ENCODE measurements at regions of chr22 and their contacts with region 1.

Region 1: GRCh38 chr22:31943976-31944699 is at the start of gene YWHAH:
- DNase-seq: peak; percentile 96 to 99 (median 97)
- ATAC-seq: peak; percentile 91 to 95 (median 94)
- H3K4me3 ChIP-seq: peak within 1 kb of the TSS; percentile 79 to 98 (median 96)
- H3K27ac ChIP-seq: peak within 1 kb of the TSS; percentile 95 to 100 (median 98)
- H3K4me1 ChIP-seq: peaks cover 0 to 43% (median 29%) of the 10 kb centered on the region in 12 donors
- H3K27me3 ChIP-seq: no peaks in the 10 kb centered on the region
- CTCF ChIP-seq: no peak
- POLR2A ChIP-seq: peak in 1 of 2 donors; percentile 67
- total RNA-seq, gene YWHAH: 57.5 to 126 (median 84.1) TPM

Region 2: DNA sequence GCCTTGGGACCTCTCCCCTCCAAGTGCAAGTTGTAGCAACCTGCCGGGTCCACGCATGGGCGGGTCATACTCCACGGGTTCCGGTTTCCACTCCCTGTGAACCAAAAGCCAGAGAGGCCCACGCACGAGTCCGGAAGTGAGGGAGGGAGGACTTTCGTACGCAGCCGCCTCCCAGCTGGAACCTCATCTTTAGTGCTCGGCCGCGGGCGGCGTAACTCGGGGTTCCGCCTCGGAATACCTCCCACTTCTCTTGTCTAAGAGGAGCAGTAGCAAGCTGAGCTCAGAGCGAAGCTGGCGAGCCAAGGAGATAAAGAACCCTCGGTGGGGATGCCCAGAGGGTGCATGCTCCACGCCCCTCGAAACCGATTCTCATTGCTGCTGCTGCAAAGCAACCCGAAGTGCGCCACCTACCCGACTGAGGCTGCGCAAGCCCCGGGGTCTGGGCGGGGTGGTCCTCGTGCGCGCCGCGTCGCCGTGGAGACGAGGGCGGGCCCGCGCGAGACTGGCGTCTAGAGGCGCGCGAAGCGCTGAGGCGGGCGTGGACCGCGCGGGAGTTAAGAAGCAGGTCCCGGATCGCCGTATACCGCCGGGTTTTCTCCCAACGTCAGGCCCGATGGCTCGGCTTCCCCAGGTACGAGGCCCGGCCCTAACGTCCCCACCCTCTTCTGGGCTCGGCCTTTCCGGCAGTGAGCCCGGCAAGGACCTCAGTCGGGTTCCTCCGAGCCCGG is 448.0 kb before region 1 on chr22 and contains the start of gene SFI1:
- intact Hi-C with region 1: loop called in 1 of 10 experiments (anchors 10 kb)
- DNase-seq: peak; percentile 92 to 96 (median 93)
- ATAC-seq: peak; percentile 92 to 98 (median 97)
- H3K4me3 ChIP-seq: peak within 1 kb of the TSS; percentile 53 to 95 (median 84)
- H3K27ac ChIP-seq: peak within 1 kb of the TSS in 11 of 12 donors; percentile 65 to 93 (median 83)
- H3K4me1 ChIP-seq: peaks cover 2 to 28% (median 13%) of the 10 kb centered on the region in 12 donors
- H3K27me3 ChIP-seq: no peaks in the 10 kb centered on the region
- CTCF ChIP-seq: peak in 9 of 12 donors; percentile 14 to 59 (median 37)
- POLR2A ChIP-seq: peak in 1 of 2 donors; percentile 52
- total RNA-seq, gene SFI1: 2.2 to 18.3 (median 6.4) TPM

Region 3: DNA sequence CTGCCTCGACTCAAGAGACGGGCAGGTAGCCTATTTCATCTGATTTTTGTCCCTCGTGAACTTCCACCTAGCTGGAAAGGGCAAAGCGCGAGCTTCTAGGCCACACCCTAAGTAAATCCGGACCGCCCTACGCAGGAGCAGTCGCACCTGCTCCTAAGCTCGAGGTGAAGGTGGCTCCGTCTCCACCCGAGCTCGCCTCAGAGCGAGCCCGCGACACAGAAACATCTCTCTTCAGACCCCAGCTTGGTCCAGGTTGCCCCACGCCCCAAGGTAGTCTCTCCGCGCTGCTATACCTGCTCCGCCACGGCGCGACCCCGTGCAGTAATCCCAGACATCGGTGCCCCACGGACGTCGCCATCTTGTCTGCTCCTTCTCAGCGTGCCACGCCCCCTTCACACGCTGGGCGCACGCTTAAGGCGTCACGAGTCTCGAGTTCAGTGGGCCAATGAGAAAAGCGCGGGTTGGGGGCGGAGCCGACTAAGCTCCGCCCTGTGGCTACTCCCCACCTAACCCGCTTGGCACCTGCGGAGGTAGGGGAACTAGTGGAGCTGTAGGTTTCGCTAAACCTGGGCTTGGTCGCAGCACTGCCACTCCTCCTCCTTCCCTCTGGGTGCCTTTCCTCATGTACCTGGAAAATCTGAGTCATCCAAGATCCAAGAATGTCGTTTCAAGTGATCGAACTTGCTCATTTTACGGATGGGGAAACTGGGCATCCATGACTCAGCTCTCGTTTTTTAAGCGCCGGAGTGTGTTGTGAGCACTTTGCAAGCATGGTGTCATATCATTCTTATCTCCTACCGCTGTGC is 282.1 kb before region 1 on chr22 and contains the start of gene PISD:
- intact Hi-C with region 1: loop called in 4 of 10 experiments (anchors 10 kb)
- DNase-seq: peak; percentile 94 to 97 (median 96)
- ATAC-seq: peak; percentile 98 to 100 (median 100)
- H3K4me3 ChIP-seq: peak within 1 kb of the TSS; percentile 33 to 100 (median 86)
- H3K27ac ChIP-seq: peak within 1 kb of the TSS in 10 of 12 donors; percentile 34 to 81 (median 54)
- H3K4me1 ChIP-seq: peaks cover 0 to 21% (median 13%) of the 10 kb centered on the region in 12 donors
- H3K27me3 ChIP-seq: no peaks in the 10 kb centered on the region
- CTCF ChIP-seq: no peak
- POLR2A ChIP-seq: peak in 1 of 2 donors; percentile 58
- total RNA-seq, gene PISD: 13.1 to 38.1 (median 17.0) TPM

Region 4: DNA sequence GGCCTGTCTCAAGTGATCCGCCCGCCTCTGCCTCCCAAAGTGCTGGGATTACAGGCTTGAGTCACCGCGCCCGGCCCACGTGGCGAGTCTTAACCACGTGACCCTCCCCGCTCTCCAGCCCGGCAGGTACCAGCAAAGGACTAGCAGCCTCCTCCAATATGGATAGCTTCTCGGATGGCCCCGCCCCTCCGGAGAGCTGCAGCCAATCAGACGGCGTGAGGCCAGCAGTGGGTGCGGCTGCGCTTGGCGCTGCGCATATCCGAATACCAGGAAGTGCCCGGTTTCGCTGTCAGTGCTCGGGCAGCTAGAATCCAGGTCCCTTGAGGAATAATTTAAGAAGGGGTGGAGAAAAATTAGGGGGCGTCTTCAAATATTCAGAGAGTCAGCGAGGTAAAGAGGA is 267.4 kb before region 1 on chr22:
- intact Hi-C with region 1: loop called in 1 of 10 experiments (anchors 10 kb)
- DNase-seq: peak; percentile 92 to 97 (median 94)
- ATAC-seq: peak; percentile 98 to 100 (median 100)
- H3K4me3 ChIP-seq: peak overlapping the region; percentile 6 to 78 (median 56)
- H3K27ac ChIP-seq: peak overlapping the region in 10 of 12 donors; percentile 7 to 66 (median 56)
- H3K4me1 ChIP-seq: peaks cover 0 to 25% (median 5%) of the 10 kb centered on the region in 12 donors
- H3K27me3 ChIP-seq: no peaks in the 10 kb centered on the region
- CTCF ChIP-seq: no peak
- POLR2A ChIP-seq: peak in 1 of 2 donors; percentile 37

Region 5: DNA sequence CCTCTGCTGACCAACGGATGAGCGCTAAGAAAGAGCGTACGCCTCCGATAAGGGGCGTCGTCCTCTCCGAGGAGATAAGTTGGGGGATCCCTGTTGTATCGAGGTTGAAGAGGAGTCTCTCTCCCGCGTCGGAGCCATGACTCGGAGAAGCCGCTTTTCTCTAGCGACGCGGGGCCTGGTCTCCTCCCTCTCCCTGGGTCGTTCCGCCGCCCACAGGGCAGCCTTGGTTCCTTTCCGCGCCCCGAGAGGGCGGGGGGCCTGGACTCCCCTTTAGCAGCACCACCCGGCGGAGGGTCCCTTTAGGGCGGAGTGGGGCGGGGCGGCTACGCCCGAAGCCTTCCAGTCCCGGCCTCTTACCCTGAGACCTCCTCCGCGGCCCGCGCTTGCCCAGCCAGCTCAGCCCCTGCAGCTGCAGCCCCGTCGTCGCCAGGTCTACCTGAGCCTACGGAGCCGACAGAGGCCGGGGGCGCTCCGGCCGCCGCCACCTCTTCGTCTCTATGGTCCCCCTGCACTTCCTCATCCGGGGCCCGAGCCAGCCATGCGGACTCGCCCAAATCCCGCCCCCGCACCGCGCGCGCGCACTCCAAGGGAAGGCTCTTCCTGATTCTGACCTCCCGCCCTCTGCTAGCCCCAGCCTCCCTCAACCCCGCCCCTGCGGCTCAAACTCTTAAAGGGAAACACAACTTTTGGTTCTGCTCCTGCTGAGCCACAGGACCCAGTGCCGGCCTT is 194.3 kb before region 1 on chr22 and contains the start of gene PRR14L:
- intact Hi-C with region 1: loop called in 3 of 10 experiments (anchors 5 to 10 kb)
- DNase-seq: peak; percentile 98 to 99 (median 99)
- ATAC-seq: peak; percentile 89 to 95 (median 94)
- H3K4me3 ChIP-seq: peak within 1 kb of the TSS; percentile 62 to 100 (median 86)
- H3K27ac ChIP-seq: peak within 1 kb of the TSS; percentile 73 to 95 (median 89)
- H3K4me1 ChIP-seq: peaks cover 3 to 54% (median 44%) of the 10 kb centered on the region in 12 donors
- H3K27me3 ChIP-seq: no peaks in the 10 kb centered on the region
- CTCF ChIP-seq: peak in 4 of 12 donors; percentile 12 to 24 (median 18)
- POLR2A ChIP-seq: peak in 1 of 2 donors; percentile 84
- total RNA-seq, gene PRR14L: 6.6 to 29.1 (median 15.1) TPM

Region 6: DNA sequence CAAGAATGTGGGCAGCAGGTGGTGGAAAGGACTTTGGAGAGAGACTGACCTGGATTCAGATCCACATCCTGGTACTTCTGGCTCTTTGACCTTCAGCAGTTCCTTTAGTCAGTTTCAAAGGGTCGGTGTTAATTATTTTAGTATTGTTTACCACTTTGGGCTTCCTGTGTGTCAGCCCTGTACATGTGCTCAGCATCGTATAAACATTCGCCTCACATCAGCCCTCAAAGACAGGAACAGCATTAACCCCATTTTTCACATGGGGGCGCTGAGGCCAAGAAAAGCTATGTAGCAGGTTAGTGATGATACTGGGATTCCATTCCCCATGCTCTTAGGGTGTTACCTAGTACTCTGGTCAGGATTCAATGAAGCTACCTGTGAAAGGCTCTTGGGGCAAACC is 71.9 kb before region 1 on chr22:
- intact Hi-C with region 1: loop called in 2 of 10 experiments (anchors 5 kb)
- DNase-seq: no peak
- ATAC-seq: peak in 1 of 4 donors; percentile 36
- H3K4me3 ChIP-seq: no peak overlapping the region
- H3K27ac ChIP-seq: no peak overlapping the region
- H3K4me1 ChIP-seq: peaks cover 0 to 14% (median 0%) of the 10 kb centered on the region in 12 donors
- H3K27me3 ChIP-seq: no peaks in the 10 kb centered on the region
- CTCF ChIP-seq: peak in 6 of 12 donors; percentile 12 to 39 (median 21)
- POLR2A ChIP-seq: no peak

Measured in heart left ventricle (tissue), 16 donors.